HepG2 (cell line): ENCODE measurements at regions of chrX and their contacts with region 1.

Region 1: GRCh38 chrX:78103623-78104446 is at the start of gene PGK1:
- DNase-seq: peak; percentile 87
- ATAC-seq: peak; percentile 99
- H3K4me3 ChIP-seq: peak within 1 kb of the TSS; percentile 74 to 87 (median 80)
- H3K27ac ChIP-seq: peak within 1 kb of the TSS; percentile 88
- H3K4me1 ChIP-seq: peaks cover 39% of the 10 kb centered on the region
- H3K27me3 ChIP-seq: no peaks in the 10 kb centered on the region; a peak in 1 of 5 replicates
- CTCF ChIP-seq: no peak; the same call in 1 of the 2 replicates
- EP300 ChIP-seq: peak in 1 of 2 experiments; percentile 70; a peak in 1 of 4 replicates
- POLR2A ChIP-seq: peak; percentile 86 to 90
- RAD21 ChIP-seq: no peak
- total RNA-seq, gene PGK1: 325 and 530 TPM in 2 replicates

Region 2: DNA sequence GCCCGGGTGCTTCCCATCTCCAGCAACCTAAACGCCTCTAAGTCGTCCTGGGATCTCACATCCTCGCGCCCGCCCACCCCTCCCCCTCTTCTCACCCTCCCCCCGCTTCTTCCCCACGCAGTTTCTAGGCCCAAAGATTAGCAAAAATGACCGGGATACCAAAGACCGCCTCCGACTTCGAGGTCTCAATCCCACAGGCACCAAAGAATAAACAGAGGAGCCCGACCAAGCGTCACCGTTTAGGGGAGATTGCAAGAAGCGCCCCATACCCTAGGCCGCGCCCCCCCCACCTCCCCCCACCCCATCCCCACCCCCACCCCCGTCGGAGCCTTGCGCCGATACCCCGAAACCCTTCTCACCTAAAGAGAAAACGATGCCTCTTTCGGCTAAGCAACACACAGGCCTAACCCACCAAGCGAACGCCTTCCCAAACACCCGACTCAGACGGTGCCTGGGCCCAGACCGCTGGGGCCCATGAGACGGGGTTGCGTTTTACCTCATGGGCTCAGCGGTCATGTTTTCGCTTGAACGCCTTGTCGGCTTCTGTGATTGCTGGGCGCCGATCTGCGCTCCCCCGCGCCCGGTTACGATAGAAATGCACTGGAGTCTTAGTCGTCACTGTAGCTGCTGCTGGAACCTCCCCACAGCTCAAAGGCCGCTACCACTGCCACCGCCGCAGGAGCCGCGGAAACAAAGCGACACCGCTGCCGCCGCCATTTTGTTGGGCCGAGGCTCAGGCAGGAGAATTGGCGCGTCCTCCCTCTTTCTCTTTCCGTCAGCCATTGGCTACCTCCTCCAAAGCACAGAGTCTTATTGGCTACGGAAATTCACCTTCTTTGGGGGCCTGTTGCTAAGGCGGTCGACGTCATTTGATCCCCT is 318.1 kb before region 1 on chrX and contains the start of gene ATRX:
- CTCF ChIA-PET with region 1: no interaction called
- POLR2A ChIA-PET with region 1: no interaction called
- in situ Hi-C with region 1: no loop called
- intact Hi-C with region 1: loop called (anchors 5 kb)
- DNase-seq: peak; percentile 82
- ATAC-seq: peak; percentile 92
- H3K4me3 ChIP-seq: peak within 1 kb of the TSS; percentile 80 to 84 (median 81)
- H3K27ac ChIP-seq: peak within 1 kb of the TSS; percentile 95
- H3K4me1 ChIP-seq: 0 out of 2 replicates have a peak, but pooled peaks cover 7% of the 10 kb centered on the region
- H3K27me3 ChIP-seq: no peaks in the 10 kb centered on the region; a peak in 1 of 5 replicates
- CTCF ChIP-seq: no peak
- EP300 ChIP-seq: 0 out of 4 replicates have a peak, but pooled peaks of 1 of the 2 experiments have one; percentile 36
- POLR2A ChIP-seq: peak; percentile 73 to 80
- RAD21 ChIP-seq: no peak; the same call in 1 of the 2 replicates
- total RNA-seq, gene ATRX: 44.5 and 55.4 TPM in 2 replicates

Region 3: GRCh38 chrX:77910108-77910840 is 193.6 kb before region 1 on chrX and contains the start of gene ATP7A:
- CTCF ChIA-PET with region 1: no interaction called
- POLR2A ChIA-PET with region 1: no interaction called
- in situ Hi-C with region 1: loop called (anchors 25 kb)
- intact Hi-C with region 1: loop called (anchors 2 kb)
- DNase-seq: peak; percentile 84
- ATAC-seq: peak; percentile 97
- H3K4me3 ChIP-seq: peak within 1 kb of the TSS; percentile 66 to 77 (median 73)
- H3K27ac ChIP-seq: peak within 1 kb of the TSS; percentile 68
- H3K4me1 ChIP-seq: no peaks in the 10 kb centered on the region
- H3K27me3 ChIP-seq: no peaks in the 10 kb centered on the region
- CTCF ChIP-seq: peak; percentile 84
- EP300 ChIP-seq: peak in 1 of 2 experiments; percentile 27; a peak in 1 of 4 replicates
- POLR2A ChIP-seq: peak; percentile 52 to 53; a peak in 3 of 4 replicates
- RAD21 ChIP-seq: peak; percentile 41; the same call in 1 of the 2 replicates
- total RNA-seq, gene ATP7A: 3.9 and 4.7 TPM in 2 replicates

Region 4: GRCh38 chrX:78064152-78064551 is 39.7 kb before region 1 on chrX:
- CTCF ChIA-PET with region 1: no interaction called
- POLR2A ChIA-PET with region 1: no interaction called
- in situ Hi-C with region 1: no loop called
- intact Hi-C with region 1: no loop called
- DNase-seq: no peak
- ATAC-seq: no peak
- H3K4me3 ChIP-seq: no peak overlapping the region
- H3K27ac ChIP-seq: no peak overlapping the region
- H3K4me1 ChIP-seq: 0 out of 2 replicates have a peak, but pooled peaks cover 8% of the 10 kb centered on the region
- H3K27me3 ChIP-seq: no peaks in the 10 kb centered on the region
- CTCF ChIP-seq: no peak
- EP300 ChIP-seq: no peak
- POLR2A ChIP-seq: no peak
- RAD21 ChIP-seq: no peak

Region 5: GRCh38 chrX:78075787-78076389 is 27.9 kb before region 1 on chrX:
- CTCF ChIA-PET with region 1: no interaction called
- POLR2A ChIA-PET with region 1: no interaction called
- in situ Hi-C with region 1: no loop called
- intact Hi-C with region 1: no loop called
- DNase-seq: no peak
- ATAC-seq: no peak
- H3K4me3 ChIP-seq: no peak overlapping the region
- H3K27ac ChIP-seq: no peak overlapping the region
- H3K4me1 ChIP-seq: no peaks in the 10 kb centered on the region
- H3K27me3 ChIP-seq: no peaks in the 10 kb centered on the region
- CTCF ChIP-seq: no peak
- EP300 ChIP-seq: no peak
- POLR2A ChIP-seq: no peak
- RAD21 ChIP-seq: no peak